ENCODE measurements at regions of chr10 and their contacts with region 1.

Region 1: DNA sequence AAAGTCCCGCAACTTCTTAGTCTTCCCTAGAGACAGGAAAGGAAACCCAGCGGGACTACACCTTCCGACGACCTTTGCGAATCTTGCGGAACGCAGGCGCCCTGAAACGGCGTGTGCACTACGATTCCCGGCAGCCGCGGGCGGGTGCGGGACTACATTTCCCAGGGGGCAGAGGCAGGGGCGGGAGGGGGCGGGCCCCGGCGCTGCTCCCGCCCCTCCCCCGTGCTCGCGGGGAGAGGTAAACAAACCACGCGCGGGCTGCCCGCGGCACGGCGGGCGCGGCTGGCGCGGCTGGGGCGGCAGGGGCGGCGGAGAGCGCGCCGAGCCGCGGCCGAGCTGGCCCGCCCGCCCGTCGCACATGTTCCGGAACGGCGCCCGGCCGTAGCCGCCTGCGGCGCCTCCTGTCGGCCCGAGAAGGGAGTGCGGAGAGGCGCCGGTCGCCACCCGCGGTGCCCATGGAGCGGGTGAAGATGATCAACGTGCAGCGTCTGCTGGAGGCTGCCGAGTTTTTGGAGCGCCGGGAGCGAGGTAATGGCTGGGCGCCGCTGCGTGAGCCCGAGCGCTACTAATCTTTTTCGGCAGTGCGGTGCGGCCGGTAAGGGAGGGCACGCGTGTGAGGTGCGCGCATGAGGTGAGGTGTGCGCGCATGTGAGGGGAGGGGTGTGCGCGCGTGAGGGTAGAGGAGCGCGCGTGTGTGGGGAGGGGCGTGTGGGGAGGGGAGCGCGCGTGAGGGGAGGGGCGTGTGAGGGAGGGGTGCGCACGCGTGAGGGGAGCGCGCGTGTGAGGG is 18.5 kb downstream of the MXI1 start:
- DNase-seq: peak; percentile 84
- H3K4me3 Mint-ChIP-seq: peak overlapping the region; percentile 92
- H3K27ac Mint-ChIP-seq: peak overlapping the region; percentile 97
- H3K4me1 Mint-ChIP-seq: peaks cover 47% of the 10 kb centered on the region
- H3K27me3 Mint-ChIP-seq: peaks cover 4% of the 10 kb centered on the region

Region 2: GRCh38 chr10:109883859-109884771 is 341.8 kb before region 1 on chr10:
- intact Hi-C with region 1: loop called (anchors 5 kb)
- DNase-seq: peak; percentile 31
- H3K4me3 Mint-ChIP-seq: no peak overlapping the region
- H3K27ac Mint-ChIP-seq: no peak overlapping the region
- H3K4me1 Mint-ChIP-seq: peaks cover 21% of the 10 kb centered on the region
- H3K27me3 Mint-ChIP-seq: no peaks in the 10 kb centered on the region

Region 3: GRCh38 chr10:110007701-110008517 is 218.0 kb before region 1 on chr10 and contains the start of gene ADD3:
- intact Hi-C with region 1: loop called (anchors 1 kb)
- DNase-seq: peak; percentile 81
- H3K4me3 Mint-ChIP-seq: peak within 1 kb of the TSS; percentile 93
- H3K27ac Mint-ChIP-seq: peak within 1 kb of the TSS; percentile 81
- H3K4me1 Mint-ChIP-seq: peaks cover 47% of the 10 kb centered on the region
- H3K27me3 Mint-ChIP-seq: peaks cover 2% of the 10 kb centered on the region
- total RNA-seq, gene ADD3: 30.1 and 36.6 TPM in 2 replicates

Region 4: GRCh38 chr10:110137142-110137545 is 88.8 kb before region 1 on chr10:
- intact Hi-C with region 1: loop called (anchors 1 kb)
- DNase-seq: no peak
- H3K4me3 Mint-ChIP-seq: no peak overlapping the region
- H3K27ac Mint-ChIP-seq: peak overlapping the region; percentile 1
- H3K4me1 Mint-ChIP-seq: peaks cover 33% of the 10 kb centered on the region
- H3K27me3 Mint-ChIP-seq: no peaks in the 10 kb centered on the region

Region 5: GRCh38 chr10:110279407-110279986 is 53.5 kb after region 1 on chr10:
- intact Hi-C with region 1: loop called (anchors 1 kb)
- DNase-seq: peak; percentile 18
- H3K4me3 Mint-ChIP-seq: no peak overlapping the region
- H3K27ac Mint-ChIP-seq: no peak overlapping the region
- H3K4me1 Mint-ChIP-seq: peaks cover 20% of the 10 kb centered on the region
- H3K27me3 Mint-ChIP-seq: peaks cover 14% of the 10 kb centered on the region

Region 6: DNA sequence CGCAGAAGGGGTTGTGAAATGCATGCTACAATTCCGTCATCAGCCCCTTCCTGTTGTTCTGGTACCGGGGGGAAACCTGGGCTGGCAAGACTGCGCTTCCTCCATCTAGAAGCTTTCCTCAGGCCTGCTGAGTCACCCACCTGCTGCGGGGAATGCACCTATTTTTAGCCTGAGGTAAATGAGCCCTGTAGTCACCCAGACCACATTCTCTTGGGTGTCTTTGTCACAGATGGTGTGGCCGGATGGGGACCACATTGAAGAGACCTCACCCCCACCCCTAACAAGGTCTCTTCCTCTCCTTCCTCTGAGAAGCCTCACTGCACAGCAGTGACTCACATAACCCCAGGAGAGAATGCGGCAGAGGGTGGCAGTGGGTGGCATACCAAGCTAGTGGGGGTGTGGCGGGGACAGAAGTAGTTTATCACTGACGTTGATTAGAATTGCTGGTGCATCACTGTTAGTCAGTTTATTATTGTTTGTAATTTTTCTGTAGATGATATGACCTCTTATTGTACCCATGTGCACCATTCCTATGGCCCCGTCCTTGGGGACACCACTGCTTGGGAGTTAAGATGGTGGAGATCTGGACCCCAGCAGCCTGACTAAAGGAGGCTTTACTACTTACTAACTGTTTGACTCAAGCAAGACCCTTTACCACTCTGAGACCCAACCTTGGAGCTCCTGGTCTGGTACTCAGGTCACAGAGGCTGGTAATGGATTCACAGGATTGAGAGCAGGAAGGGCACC is 188.8 kb after region 1 on chr10:
- intact Hi-C with region 1: loop called (anchors 5 kb)
- DNase-seq: peak; percentile 87
- H3K4me3 Mint-ChIP-seq: peak overlapping the region; percentile 56
- H3K27ac Mint-ChIP-seq: peak overlapping the region; percentile 97
- H3K4me1 Mint-ChIP-seq: peaks cover 74% of the 10 kb centered on the region
- H3K27me3 Mint-ChIP-seq: peaks cover 1% of the 10 kb centered on the region

Region 7: GRCh38 chr10:110528224-110528997 is 302.5 kb after region 1 on chr10:
- intact Hi-C with region 1: no loop called
- DNase-seq: no peak
- H3K4me3 Mint-ChIP-seq: peak overlapping the region; percentile 64
- H3K27ac Mint-ChIP-seq: peak overlapping the region; percentile 94
- H3K4me1 Mint-ChIP-seq: peaks cover 83% of the 10 kb centered on the region
- H3K27me3 Mint-ChIP-seq: no peaks in the 10 kb centered on the region

Region 8: DNA sequence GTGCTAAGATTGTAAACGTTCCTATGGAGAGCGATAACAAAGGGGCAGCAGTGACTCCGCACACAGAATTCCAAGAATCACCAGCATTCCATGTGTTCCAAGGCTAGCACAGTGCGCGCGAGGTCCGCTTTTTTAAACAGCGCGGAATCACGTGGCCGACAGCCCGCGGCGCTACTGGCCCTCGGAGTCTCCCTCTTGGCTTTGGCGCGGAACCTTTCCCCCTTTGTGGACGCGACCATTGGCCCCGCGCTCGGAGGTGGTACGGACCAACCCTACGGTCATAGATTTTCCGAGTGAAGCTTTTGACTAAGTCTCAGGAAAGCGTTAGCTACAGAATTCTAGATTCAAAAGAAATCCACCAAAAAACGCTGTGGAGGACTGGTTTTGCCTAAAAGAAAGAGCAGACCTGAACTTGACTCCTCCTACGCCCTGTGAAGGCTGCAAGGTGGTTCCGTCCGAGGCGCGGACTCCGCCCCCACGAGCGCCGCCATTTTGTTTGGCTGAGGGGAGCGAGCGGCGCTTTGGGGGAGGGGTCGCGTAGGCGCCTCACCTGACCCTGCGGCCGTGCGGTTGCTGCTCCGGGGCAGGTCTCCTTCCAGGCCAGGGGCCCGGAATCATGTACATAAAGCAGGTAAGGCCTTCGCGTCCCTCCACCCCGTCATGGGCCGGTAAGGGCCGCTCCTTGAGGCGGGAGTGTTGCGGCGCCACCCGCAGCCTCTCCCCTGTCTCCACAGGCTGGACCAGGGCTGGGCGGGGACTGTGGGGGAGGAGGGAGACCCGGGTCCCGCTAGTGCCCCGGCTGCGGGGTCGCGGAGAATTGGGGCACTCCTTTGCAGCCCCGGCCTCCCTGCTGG is 341.5 kb after region 1 on chr10 and contains the start of gene SMC3:
- intact Hi-C with region 1: loop called (anchors 2 kb)
- DNase-seq: peak; percentile 89
- H3K4me3 Mint-ChIP-seq: peak within 1 kb of the TSS; percentile 93
- H3K27ac Mint-ChIP-seq: peak within 1 kb of the TSS; percentile 96
- H3K4me1 Mint-ChIP-seq: peaks cover 44% of the 10 kb centered on the region
- H3K27me3 Mint-ChIP-seq: peaks cover 14% of the 10 kb centered on the region
- total RNA-seq, gene SMC3: 74.5 and 77.9 TPM in 2 replicates

Measured in activated T-helper 1 cell treated with anti-CD3 and anti-CD28 coated beads, Interleukin-12 subunit alpha, Interleukin-12 subunit beta, Interleukin-2, Interleukin-4 antibody, amounts not matched to agents 30 ng/mL and 10 ng/mL and 1 ng/mL, durations not matched to agents 14 hours and 24 hours and 36 hours (primary cell).